ENCODE measurements at regions of chr4 and their contacts with region 1.

Region 1: GRCh38 chr4:70515367-70516245 is 2.8 kb upstream of the AMTN start:
- DNase-seq: no peak
- H3K4me3 ChIP-seq: no peak overlapping the region
- H3K27ac ChIP-seq: no peak overlapping the region
- H3K4me1 ChIP-seq: no peaks in the 10 kb centered on the region
- H3K27me3 ChIP-seq: no peaks in the 10 kb centered on the region
- CTCF ChIP-seq: no peak
- POLR2A ChIP-seq: no peak

Region 2: DNA sequence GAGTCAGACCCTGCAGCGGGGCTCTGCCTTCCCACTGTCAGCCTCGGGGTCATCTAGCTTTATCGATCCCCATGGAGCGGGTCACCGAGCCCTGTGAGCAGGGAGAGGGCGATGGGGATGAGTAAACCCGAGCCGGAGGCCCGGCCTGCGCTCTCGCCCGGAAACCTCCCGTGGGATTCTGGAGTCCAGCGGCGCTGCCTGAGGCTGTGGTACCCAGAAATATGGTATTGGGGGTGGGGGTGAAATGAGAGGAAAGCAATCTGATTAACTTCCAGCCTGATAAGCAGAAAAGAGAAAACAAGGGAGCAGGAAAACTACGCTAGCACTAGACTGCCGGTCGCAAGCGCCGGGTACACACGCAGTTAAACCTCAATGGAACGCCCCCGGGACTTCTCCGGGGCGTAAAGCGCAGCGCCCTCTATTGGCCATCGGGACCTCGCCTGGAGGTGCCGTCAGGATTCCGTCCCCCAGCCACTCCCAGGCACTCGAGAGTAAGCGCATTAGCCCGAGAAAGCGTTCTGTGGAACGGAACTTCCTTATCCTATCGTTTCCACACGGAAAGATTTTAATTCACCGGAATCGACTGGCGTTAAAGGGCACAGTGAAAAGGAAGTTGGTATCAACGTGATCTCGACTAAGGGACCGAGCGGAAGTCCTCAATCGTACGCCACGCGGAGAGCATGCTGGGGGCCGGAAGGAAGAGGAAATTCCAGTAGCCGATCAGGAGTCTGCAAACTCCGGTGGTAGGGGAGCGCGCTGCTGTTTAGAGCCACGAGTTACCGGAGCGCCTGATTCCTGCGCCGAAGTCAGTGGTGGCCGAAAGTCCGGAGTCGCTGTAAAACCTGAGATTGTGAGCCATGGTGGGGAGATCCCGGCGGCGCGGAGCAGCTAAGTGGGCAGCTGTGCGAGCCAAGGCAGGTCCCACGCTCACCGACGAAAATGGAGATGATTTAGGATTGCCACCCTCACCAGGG is 172.5 kb after region 1 on chr4 and contains the start of gene UTP3:
- intact Hi-C with region 1: no loop called
- DNase-seq: peak; percentile 92
- H3K4me3 ChIP-seq: peak within 1 kb of the TSS; percentile 82 to 92 (median 87)
- H3K27ac ChIP-seq: peak within 1 kb of the TSS; percentile 96 to 97
- H3K4me1 ChIP-seq: peaks cover 0 to 4% of the 10 kb centered on the region in 2 donors
- H3K27me3 ChIP-seq: no peaks in the 10 kb centered on the region
- CTCF ChIP-seq: peak; percentile 71 to 91 (median 91)
- POLR2A ChIP-seq: no peak
- total RNA-seq, gene UTP3: 18.9 to 22.0 (median 19.3) TPM

Region 3: DNA sequence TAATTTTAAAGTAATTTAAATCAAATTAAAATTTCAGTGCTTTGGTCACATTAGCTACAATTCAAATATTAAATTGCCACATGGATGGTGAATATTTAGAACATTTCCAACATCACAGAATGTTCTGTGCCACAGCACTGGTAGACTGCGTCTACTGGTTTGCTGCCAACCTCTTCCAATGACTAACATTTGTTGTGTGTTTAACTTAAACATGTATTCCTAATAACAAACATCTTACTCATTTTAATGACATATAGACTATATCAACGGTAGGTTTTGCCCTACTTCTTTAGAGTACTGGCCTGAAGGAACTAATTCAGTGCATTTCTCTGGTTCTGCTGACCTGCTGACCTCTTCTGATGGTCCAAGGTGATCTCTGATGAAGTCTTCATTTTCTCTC is 635.4 kb after region 1 on chr4:
- intact Hi-C with region 1: loop called (anchors 5 kb)
- DNase-seq: no peak
- H3K4me3 ChIP-seq: no peak overlapping the region
- H3K27ac ChIP-seq: no peak overlapping the region
- H3K4me1 ChIP-seq: no peaks in the 10 kb centered on the region
- H3K27me3 ChIP-seq: no peaks in the 10 kb centered on the region
- CTCF ChIP-seq: no peak
- POLR2A ChIP-seq: no peak